GM12878 (cell line): ENCODE measurements at regions of chr11 and their contacts with region 1.

Region 1: DNA sequence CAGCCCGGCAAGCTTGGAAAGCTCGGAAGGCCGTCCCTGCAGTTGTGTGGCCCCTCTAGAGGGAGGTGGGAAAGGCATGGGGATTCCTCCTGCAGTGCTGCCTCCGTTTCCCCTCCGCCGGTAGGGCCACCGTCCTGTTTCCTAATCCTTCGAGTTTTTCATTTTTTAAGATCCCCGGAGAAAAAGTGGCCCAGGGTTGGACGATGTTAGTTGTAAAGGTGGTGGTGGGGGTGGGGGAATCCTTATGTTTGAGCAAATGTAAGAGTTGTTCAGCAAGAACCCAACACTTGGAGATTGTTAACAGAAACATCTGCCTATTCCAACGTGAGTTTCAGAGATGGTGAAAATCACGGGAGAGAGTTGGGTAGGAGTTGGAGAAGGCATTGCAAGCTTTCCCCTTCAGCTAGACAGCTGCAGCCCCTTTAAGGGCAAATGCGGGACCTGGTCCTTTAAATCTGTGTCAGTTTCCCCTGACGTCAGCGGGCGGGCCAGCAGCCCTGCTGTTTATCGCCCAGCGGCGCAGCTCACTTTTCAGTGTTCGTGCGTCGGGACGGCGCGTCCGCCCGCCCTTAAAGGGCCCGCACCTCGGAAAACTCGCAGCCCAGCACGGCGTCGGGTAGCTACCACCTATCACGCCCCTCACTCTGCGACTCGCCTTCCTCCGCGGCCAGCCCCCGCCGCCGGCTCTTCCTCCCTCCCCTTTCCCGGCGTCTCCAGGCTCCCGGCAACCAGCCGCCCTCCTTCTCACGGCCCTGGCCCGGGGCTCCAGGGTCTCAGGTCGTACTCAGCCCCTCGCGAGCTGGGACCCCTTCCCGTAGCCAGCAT is at the start of gene SIDT2:
- DNase-seq: peak; percentile 75
- ATAC-seq: peak; percentile 94
- H3K4me3 ChIP-seq: peak within 1 kb of the TSS; percentile 90
- H3K27ac ChIP-seq: peak within 1 kb of the TSS; percentile 73
- H3K4me1 ChIP-seq: peaks cover 15% of the 10 kb centered on the region
- H3K27me3 ChIP-seq: no peaks in the 10 kb centered on the region
- CTCF ChIP-seq: 0 out of 6 replicates have a peak, but pooled peaks of 1 of the 3 experiments have one; percentile 0
- EP300 ChIP-seq: peak in 1 of 2 experiments; percentile 41; a peak in 1 of 4 replicates
- POLR2A ChIP-seq: peak; percentile 79
- RAD21 ChIP-seq: no peak
- polyA plus RNA-seq, gene SIDT2: 4.9 to 5.7 TPM

Region 2: GRCh38 chr11:116732271-116733042 is 446.0 kb before region 1 on chr11:
- CTCF ChIA-PET with region 1: interaction called, 10 read pairs
- POLR2A ChIA-PET with region 1: no interaction called
- RAD21 ChIA-PET with region 1: no interaction called
- SMC1A ChIA-PET with region 1: no interaction called
- in situ Hi-C with region 1: no loop called
- intact Hi-C with region 1: no loop called
- DNase-seq: peak; percentile 20
- ATAC-seq: peak; percentile 95
- H3K4me3 ChIP-seq: no peak overlapping the region
- H3K27ac ChIP-seq: no peak overlapping the region
- H3K4me1 ChIP-seq: peaks cover 16% of the 10 kb centered on the region
- H3K27me3 ChIP-seq: no peaks in the 10 kb centered on the region; a peak in 1 of 4 replicates
- CTCF ChIP-seq: peak; percentile 87 to 91 (median 89)
- EP300 ChIP-seq: no peak
- POLR2A ChIP-seq: no peak
- RAD21 ChIP-seq: peak; percentile 55

Region 3: GRCh38 chr11:116853461-116854073 is 324.9 kb before region 1 on chr11:
- CTCF ChIA-PET with region 1: interaction called, 20 read pairs
- POLR2A ChIA-PET with region 1: no interaction called
- RAD21 ChIA-PET with region 1: interaction called, 4 read pairs
- SMC1A ChIA-PET with region 1: interaction called, 3 read pairs
- in situ Hi-C with region 1: no loop called
- intact Hi-C with region 1: no loop called
- DNase-seq: peak; percentile 90
- ATAC-seq: peak; percentile 98
- H3K4me3 ChIP-seq: peak overlapping the region; percentile 31; the same call in 1 of the 2 replicates
- H3K27ac ChIP-seq: peak overlapping the region; percentile 83
- H3K4me1 ChIP-seq: peaks cover 30% of the 10 kb centered on the region
- H3K27me3 ChIP-seq: no peaks in the 10 kb centered on the region
- CTCF ChIP-seq: no peak
- EP300 ChIP-seq: peak; percentile 79 to 84
- POLR2A ChIP-seq: no peak
- RAD21 ChIP-seq: no peak

Region 4: DNA sequence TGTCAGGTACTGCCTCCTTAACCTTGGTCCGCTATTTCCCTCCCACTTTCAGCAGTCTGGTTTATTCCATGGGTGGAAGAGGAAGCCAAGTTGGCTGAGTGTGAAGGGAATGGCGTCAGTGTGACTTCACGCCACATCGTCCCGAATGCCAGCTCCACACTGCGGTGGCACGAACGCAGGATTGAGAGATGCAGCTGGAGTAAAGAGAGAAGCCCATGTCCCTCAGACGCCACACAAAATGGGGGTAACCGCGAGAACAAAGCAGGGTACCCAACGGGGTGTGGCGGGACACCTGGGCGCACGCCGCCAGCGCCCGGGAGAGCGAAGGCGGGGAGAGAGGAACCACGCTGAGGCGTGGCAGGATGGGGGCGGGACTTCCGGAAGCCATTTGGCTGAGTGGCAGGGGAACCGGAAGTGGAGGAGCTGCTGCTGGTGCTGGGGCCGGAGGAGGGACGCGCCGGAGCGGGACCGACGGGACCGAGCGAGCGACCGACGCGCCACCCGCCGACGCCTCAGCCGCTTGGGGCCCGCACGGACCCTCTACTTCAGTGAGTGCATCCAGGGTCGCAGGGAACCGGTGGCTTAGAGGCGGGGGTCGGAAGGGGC is 34.4 kb before region 1 on chr11 and contains the start of gene PAFAH1B2:
- CTCF ChIA-PET with region 1: interaction called, 93 read pairs
- POLR2A ChIA-PET with region 1: interaction called, 42 read pairs
- RAD21 ChIA-PET with region 1: interaction called, 65 read pairs
- SMC1A ChIA-PET with region 1: interaction called, 67 read pairs
- in situ Hi-C with region 1: no loop called
- intact Hi-C with region 1: loop called (anchors 1 kb)
- DNase-seq: peak; percentile 82
- ATAC-seq: peak; percentile 96
- H3K4me3 ChIP-seq: peak within 1 kb of the TSS; percentile 92
- H3K27ac ChIP-seq: peak within 1 kb of the TSS; percentile 80
- H3K4me1 ChIP-seq: peaks cover 7% of the 10 kb centered on the region
- H3K27me3 ChIP-seq: no peaks in the 10 kb centered on the region
- CTCF ChIP-seq: no peak
- EP300 ChIP-seq: no peak
- POLR2A ChIP-seq: peak; percentile 82
- RAD21 ChIP-seq: no peak
- polyA plus RNA-seq, gene PAFAH1B2: 17.6 to 64.8 TPM

Region 5: GRCh38 chr11:117189191-117189930 is 10.9 kb after region 1 on chr11:
- CTCF ChIA-PET with region 1: interaction called, 16 read pairs
- POLR2A ChIA-PET with region 1: interaction called, 14 read pairs
- RAD21 ChIA-PET with region 1: interaction called, 6 read pairs
- SMC1A ChIA-PET with region 1: interaction called, 6 read pairs
- in situ Hi-C with region 1: no loop called
- intact Hi-C with region 1: no loop called
- DNase-seq: peak; percentile 68
- ATAC-seq: peak; percentile 89
- H3K4me3 ChIP-seq: no peak overlapping the region; the same call in 1 of the 2 replicates
- H3K27ac ChIP-seq: peak overlapping the region; percentile 89
- H3K4me1 ChIP-seq: peaks cover 36% of the 10 kb centered on the region
- H3K27me3 ChIP-seq: no peaks in the 10 kb centered on the region
- CTCF ChIP-seq: no peak
- EP300 ChIP-seq: peak; percentile 69 to 74; a peak in 1 of 4 replicates
- POLR2A ChIP-seq: no peak
- RAD21 ChIP-seq: no peak

Region 6: GRCh38 chr11:117210620-117211019 is 32.2 kb after region 1 on chr11:
- CTCF ChIA-PET with region 1: interaction called, 15 read pairs
- POLR2A ChIA-PET with region 1: interaction called, 8 read pairs
- RAD21 ChIA-PET with region 1: no interaction called
- SMC1A ChIA-PET with region 1: interaction called, 5 read pairs
- in situ Hi-C with region 1: no loop called
- intact Hi-C with region 1: no loop called
- DNase-seq: no peak
- ATAC-seq: no peak
- H3K4me3 ChIP-seq: no peak overlapping the region
- H3K27ac ChIP-seq: no peak overlapping the region
- H3K4me1 ChIP-seq: no peaks in the 10 kb centered on the region
- H3K27me3 ChIP-seq: no peaks in the 10 kb centered on the region
- CTCF ChIP-seq: no peak
- EP300 ChIP-seq: no peak
- POLR2A ChIP-seq: no peak
- RAD21 ChIP-seq: no peak

Region 7: DNA sequence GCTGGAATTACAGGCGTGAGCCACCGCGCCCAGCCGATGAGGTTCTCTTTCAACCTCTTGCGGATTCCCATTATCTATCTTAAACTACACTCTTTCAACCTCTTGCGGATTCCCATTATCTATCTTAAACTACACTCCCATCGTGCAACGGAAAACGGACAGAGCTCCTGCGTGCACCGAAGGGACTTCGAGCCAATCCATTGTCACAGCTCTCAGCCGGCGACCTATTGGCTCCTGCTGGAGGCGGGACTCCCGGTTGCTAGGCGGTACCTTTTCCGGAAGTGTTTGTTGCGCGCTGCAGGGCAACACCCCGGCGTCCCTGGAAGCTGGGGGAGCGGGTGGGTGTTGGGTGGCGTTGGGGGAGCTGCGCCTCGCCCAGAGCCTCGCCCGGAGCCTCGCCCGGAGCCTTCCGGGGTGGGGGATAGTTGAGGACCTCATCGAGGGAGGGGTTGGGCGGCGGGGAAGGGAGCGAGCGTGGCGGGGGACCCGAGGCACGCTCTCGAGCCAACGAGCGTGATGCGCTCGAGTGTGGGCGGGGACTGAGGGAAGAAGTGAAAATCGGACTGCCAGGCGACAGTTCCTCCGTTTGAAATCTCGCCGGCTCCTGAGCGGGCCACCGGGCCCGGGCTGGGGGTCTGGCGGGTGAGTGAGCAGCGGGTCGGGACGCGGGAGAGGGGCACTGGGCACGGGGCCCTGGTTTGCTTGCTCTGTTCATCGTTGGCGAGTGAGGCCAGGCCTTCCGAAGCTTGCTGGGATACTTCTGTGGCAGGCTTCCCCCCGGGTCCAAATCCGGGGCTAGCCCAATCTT is 149.3 kb after region 1 on chr11 and contains the start of gene CEP164:
- CTCF ChIA-PET with region 1: interaction called, 11 read pairs
- POLR2A ChIA-PET with region 1: interaction called, 6 read pairs
- RAD21 ChIA-PET with region 1: interaction called, 8 read pairs
- SMC1A ChIA-PET with region 1: no interaction called
- in situ Hi-C with region 1: no loop called
- intact Hi-C with region 1: no loop called
- DNase-seq: peak; percentile 89
- ATAC-seq: peak; percentile 98
- H3K4me3 ChIP-seq: peak within 1 kb of the TSS; percentile 82
- H3K27ac ChIP-seq: peak within 1 kb of the TSS; percentile 39
- H3K4me1 ChIP-seq: no peaks in the 10 kb centered on the region; the same call in 1 of the 2 replicates
- H3K27me3 ChIP-seq: no peaks in the 10 kb centered on the region
- CTCF ChIP-seq: no peak
- EP300 ChIP-seq: no peak
- POLR2A ChIP-seq: peak; percentile 85
- RAD21 ChIP-seq: no peak
- polyA plus RNA-seq, gene CEP164: 4.2 to 6.7 TPM